ENCODE measurements at regions of chr3 and their contacts with region 1.

Region 1: GRCh38 chr3:150970665-150971324 is 1.7 kb downstream of the CLRN1 start:
- DNase-seq: peak; percentile 58
- H3K4me3 Mint-ChIP-seq: no peak overlapping the region
- H3K27ac Mint-ChIP-seq: no peak overlapping the region
- H3K4me1 Mint-ChIP-seq: peaks cover 15% of the 10 kb centered on the region
- H3K27me3 Mint-ChIP-seq: no peaks in the 10 kb centered on the region
- CTCF ChIP-seq: no peak

Region 2: DNA sequence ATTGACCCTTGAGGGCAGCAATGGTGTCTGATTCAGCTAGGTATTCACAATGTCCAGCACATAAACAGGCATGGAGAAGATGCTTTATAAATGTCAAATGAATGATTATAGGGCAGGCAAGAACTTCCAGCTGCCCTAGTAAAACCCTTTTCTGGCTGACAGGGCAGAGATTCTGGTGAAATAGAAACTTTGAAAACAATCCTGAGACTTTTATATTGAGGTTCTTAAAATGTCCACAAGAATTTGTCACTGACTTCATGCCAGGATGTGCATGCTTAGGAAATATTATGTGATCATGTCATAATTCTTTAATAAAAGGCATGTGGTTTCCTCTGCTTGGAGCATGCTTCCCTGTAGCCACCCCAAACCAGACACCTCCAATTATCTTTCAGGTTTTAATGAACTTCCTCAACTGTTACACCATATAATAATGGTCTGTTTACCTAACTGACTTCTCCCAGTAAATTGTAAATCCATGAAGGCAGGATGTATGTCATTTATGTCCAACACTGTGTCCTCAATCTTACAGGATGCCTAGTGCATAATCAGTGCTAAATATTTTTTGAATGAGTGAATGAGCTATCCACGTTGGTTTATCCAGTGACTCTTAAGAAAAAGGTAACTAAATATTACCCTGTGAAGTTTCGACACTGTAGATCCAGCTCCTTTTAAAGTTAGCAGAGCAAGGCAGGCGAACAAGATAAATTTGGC is 45.1 kb after region 1 on chr3:
- CTCF ChIA-PET with region 1: no interaction called
- POLR2A ChIA-PET with region 1: interaction called, 3 read pairs
- intact Hi-C with region 1: loop called (anchors 5 kb)
- DNase-seq: no peak
- H3K4me3 Mint-ChIP-seq: no peak overlapping the region
- H3K27ac Mint-ChIP-seq: no peak overlapping the region
- H3K4me1 Mint-ChIP-seq: peaks cover 8% of the 10 kb centered on the region
- H3K27me3 Mint-ChIP-seq: no peaks in the 10 kb centered on the region
- CTCF ChIP-seq: no peak